K562 (cell line): ENCODE measurements at regions of chr2 and their contacts with region 1.

Region 1: DNA sequence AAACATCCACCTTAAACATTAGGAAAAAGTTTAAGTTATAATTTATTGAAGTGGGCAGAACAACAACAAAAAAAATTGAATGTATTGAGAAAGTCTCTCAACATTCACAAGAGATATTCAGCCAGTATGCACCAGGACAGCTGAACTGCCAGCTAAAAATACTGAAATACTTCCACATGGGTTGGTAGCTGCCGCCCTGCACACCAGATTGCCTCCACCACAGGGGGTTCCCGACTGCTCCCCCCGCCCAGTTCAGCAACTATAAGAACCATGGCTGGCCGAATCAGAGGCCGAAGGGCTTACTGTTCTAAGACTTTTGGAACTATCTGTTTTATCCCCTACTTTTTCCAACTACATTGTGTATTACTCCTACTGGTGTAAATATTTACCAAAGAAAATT is 150.0 kb upstream of the LRP1B start:
- DNase-seq: no peak
- ATAC-seq: no peak
- H3K4me3 ChIP-seq: no peak overlapping the region
- H3K27ac ChIP-seq: no peak overlapping the region
- H3K4me1 ChIP-seq: no peaks in the 10 kb centered on the region
- H3K27me3 ChIP-seq: no peaks in the 10 kb centered on the region
- CTCF ChIP-seq: no peak
- EP300 ChIP-seq: no peak
- POLR2A ChIP-seq: no peak
- RAD21 ChIP-seq: no peak

Region 2: GRCh38 chr2:142241016-142241415 is 39.8 kb before region 1 on chr2:
- CTCF ChIA-PET with region 1: no interaction called
- POLR2A ChIA-PET with region 1: no interaction called
- in situ Hi-C with region 1: no loop called
- intact Hi-C with region 1: no loop called
- DNase-seq: no peak
- ATAC-seq: no peak
- H3K4me3 ChIP-seq: no peak overlapping the region
- H3K27ac ChIP-seq: no peak overlapping the region
- H3K4me1 ChIP-seq: no peaks in the 10 kb centered on the region
- H3K27me3 ChIP-seq: no peaks in the 10 kb centered on the region
- CTCF ChIP-seq: no peak
- EP300 ChIP-seq: no peak
- POLR2A ChIP-seq: no peak
- RAD21 ChIP-seq: no peak

Region 3: GRCh38 chr2:142299021-142299420 is 18.2 kb after region 1 on chr2:
- CTCF ChIA-PET with region 1: no interaction called
- POLR2A ChIA-PET with region 1: no interaction called
- in situ Hi-C with region 1: no loop called
- intact Hi-C with region 1: loop called (anchors 2 kb)
- DNase-seq: no peak
- ATAC-seq: no peak
- H3K4me3 ChIP-seq: no peak overlapping the region
- H3K27ac ChIP-seq: no peak overlapping the region
- H3K4me1 ChIP-seq: no peaks in the 10 kb centered on the region
- H3K27me3 ChIP-seq: no peaks in the 10 kb centered on the region
- CTCF ChIP-seq: no peak
- EP300 ChIP-seq: no peak
- POLR2A ChIP-seq: no peak
- RAD21 ChIP-seq: no peak